Panc1 (cell line): ENCODE measurements at regions of chr12 and their contacts with region 1.

Region 1: DNA sequence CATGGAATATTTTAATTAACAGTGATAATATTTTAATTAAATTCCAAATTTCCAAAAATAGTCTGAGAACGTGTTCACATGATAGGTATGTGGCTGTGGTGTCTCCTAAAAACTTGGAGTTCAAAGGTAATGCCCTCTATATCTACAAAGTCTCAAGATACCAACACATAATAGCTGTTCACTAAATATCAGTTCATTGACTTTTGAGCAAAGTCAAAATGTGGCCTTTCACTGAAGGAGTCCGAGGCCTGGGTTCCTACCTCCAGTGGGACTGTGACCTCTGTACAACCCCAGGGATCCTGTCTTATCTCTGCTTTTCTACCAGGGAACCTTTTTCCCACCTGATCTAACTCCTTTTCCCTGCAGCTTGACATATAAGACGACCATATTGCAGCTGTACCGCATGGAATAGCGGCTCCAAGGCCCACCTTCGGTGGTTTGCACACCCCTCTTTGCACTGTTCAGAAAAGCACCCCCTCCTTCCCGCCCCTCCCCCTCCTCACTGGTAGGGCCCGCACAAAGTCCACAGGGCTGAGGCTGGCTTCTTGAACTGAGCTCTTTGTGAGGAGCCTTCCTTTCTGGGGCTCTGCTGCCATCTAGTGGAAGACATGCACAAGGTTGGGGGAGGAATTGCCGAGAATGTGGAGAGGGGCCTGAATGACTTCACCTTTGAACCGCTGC is 3.1 kb downstream of the CCND2 start:
- DNase-seq: peak; percentile 30
- ATAC-seq: peak; percentile 87
- H3K4me3 ChIP-seq: no peak overlapping the region
- H3K27ac ChIP-seq: no peak overlapping the region
- H3K4me1 ChIP-seq: no peaks in the 10 kb centered on the region; the same call in 1 of the 2 replicates
- H3K27me3 ChIP-seq: peaks cover 17% of the 10 kb centered on the region
- CTCF ChIP-seq: peak; percentile 84

Region 2: GRCh38 chr12:3885277-3886094 is 391.2 kb before region 1 on chr12:
- CTCF ChIA-PET with region 1: interaction called, 11 read pairs
- POLR2A ChIA-PET with region 1: interaction called, 4 read pairs
- in situ Hi-C with region 1: no loop called
- intact Hi-C with region 1: loop called (anchors 2 kb)
- DNase-seq: peak; percentile 20
- ATAC-seq: no peak
- H3K4me3 ChIP-seq: no peak overlapping the region
- H3K27ac ChIP-seq: no peak overlapping the region
- H3K4me1 ChIP-seq: no peaks in the 10 kb centered on the region
- H3K27me3 ChIP-seq: peaks cover 6% of the 10 kb centered on the region
- CTCF ChIP-seq: peak; percentile 76

Region 3: GRCh38 chr12:3998968-3999826 is 277.5 kb before region 1 on chr12:
- CTCF ChIA-PET with region 1: no interaction called
- POLR2A ChIA-PET with region 1: no interaction called
- in situ Hi-C with region 1: no loop called
- intact Hi-C with region 1: loop called (anchors 10 kb)
- DNase-seq: no peak
- ATAC-seq: no peak
- H3K4me3 ChIP-seq: no peak overlapping the region
- H3K27ac ChIP-seq: no peak overlapping the region
- H3K4me1 ChIP-seq: no peaks in the 10 kb centered on the region
- H3K27me3 ChIP-seq: no peaks in the 10 kb centered on the region; the same call in 1 of the 2 replicates
- CTCF ChIP-seq: no peak

Region 4: GRCh38 chr12:4030929-4031702 is 245.5 kb before region 1 on chr12:
- CTCF ChIA-PET with region 1: interaction called, 3 read pairs
- POLR2A ChIA-PET with region 1: no interaction called
- in situ Hi-C with region 1: no loop called
- intact Hi-C with region 1: loop called (anchors 10 kb)
- DNase-seq: peak; percentile 35
- ATAC-seq: peak; percentile 99
- H3K4me3 ChIP-seq: peak overlapping the region; percentile 28
- H3K27ac ChIP-seq: no peak overlapping the region
- H3K4me1 ChIP-seq: no peaks in the 10 kb centered on the region; the same call in 1 of the 2 replicates
- H3K27me3 ChIP-seq: no peaks in the 10 kb centered on the region; the same call in 1 of the 2 replicates
- CTCF ChIP-seq: no peak

Region 5: DNA sequence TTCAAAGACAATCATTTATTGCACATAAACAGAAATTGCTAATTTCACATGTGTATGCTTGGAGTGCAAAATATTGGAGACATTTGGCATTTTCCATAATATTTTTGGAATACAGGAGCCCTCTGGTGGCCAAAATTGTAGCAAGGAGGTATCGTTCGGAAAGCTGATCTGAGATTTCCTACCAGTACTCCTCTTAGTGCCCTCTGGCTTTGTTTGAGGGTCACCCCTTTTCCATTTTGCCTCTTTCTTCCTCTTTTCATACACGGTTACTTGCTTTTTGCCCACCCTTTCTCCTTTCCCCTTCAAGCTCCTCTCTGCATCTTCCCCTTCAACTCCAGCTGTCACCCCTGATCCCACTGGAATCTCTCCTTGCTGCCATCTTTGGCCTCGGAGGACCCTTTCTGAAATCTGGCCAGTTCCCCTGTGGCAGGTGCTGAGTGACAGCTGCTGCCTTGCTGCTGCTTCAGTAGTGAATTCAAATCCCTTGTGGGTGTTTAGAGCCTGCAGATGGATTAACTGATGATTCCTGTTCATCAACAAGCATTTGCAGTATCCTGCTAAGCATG is 238.8 kb before region 1 on chr12:
- CTCF ChIA-PET with region 1: interaction called, 11 read pairs
- POLR2A ChIA-PET with region 1: no interaction called
- in situ Hi-C with region 1: no loop called
- intact Hi-C with region 1: loop called (anchors 10 kb)
- DNase-seq: no peak
- ATAC-seq: no peak
- H3K4me3 ChIP-seq: no peak overlapping the region
- H3K27ac ChIP-seq: no peak overlapping the region
- H3K4me1 ChIP-seq: no peaks in the 10 kb centered on the region
- H3K27me3 ChIP-seq: no peaks in the 10 kb centered on the region; the same call in 1 of the 2 replicates
- CTCF ChIP-seq: peak; percentile 70

Region 6: GRCh38 chr12:4107436-4107878 is 169.2 kb before region 1 on chr12:
- CTCF ChIA-PET with region 1: interaction called, 4 read pairs
- POLR2A ChIA-PET with region 1: no interaction called
- in situ Hi-C with region 1: no loop called
- intact Hi-C with region 1: loop called (anchors 10 kb)
- DNase-seq: peak; percentile 12
- ATAC-seq: peak; percentile 60; the same call in 1 of the 2 replicates
- H3K4me3 ChIP-seq: no peak overlapping the region
- H3K27ac ChIP-seq: no peak overlapping the region
- H3K4me1 ChIP-seq: no peaks in the 10 kb centered on the region
- H3K27me3 ChIP-seq: no peaks in the 10 kb centered on the region; the same call in 1 of the 2 replicates
- CTCF ChIP-seq: peak; percentile 59

Region 7: GRCh38 chr12:4119157-4119761 is 157.4 kb before region 1 on chr12:
- CTCF ChIA-PET with region 1: no interaction called
- POLR2A ChIA-PET with region 1: interaction called, 15 read pairs
- in situ Hi-C with region 1: no loop called
- intact Hi-C with region 1: no loop called
- DNase-seq: no peak
- ATAC-seq: no peak
- H3K4me3 ChIP-seq: no peak overlapping the region
- H3K27ac ChIP-seq: no peak overlapping the region
- H3K4me1 ChIP-seq: no peaks in the 10 kb centered on the region
- H3K27me3 ChIP-seq: no peaks in the 10 kb centered on the region; the same call in 1 of the 2 replicates
- CTCF ChIP-seq: no peak

Region 8: GRCh38 chr12:4261655-4262054 is 15.0 kb before region 1 on chr12:
- CTCF ChIA-PET with region 1: no interaction called
- POLR2A ChIA-PET with region 1: no interaction called
- in situ Hi-C with region 1: no loop called
- intact Hi-C with region 1: no loop called
- DNase-seq: no peak
- ATAC-seq: no peak
- H3K4me3 ChIP-seq: no peak overlapping the region
- H3K27ac ChIP-seq: no peak overlapping the region
- H3K4me1 ChIP-seq: no peaks in the 10 kb centered on the region
- H3K27me3 ChIP-seq: peaks cover 25% of the 10 kb centered on the region
- CTCF ChIP-seq: no peak